OCI-LY7 (cell line): ENCODE measurements at regions of chr7 and their contacts with region 1.

Region 1: GRCh38 chr7:149714050-149714909 is 59.1 kb downstream of the ZNF467 start:
- DNase-seq: peak; percentile 93
- H3K4me3 ChIP-seq: peak overlapping the region; percentile 96
- H3K27ac ChIP-seq: no peak overlapping the region
- H3K4me1 ChIP-seq: peaks cover 12% of the 10 kb centered on the region
- CTCF ChIP-seq: no peak

Region 2: DNA sequence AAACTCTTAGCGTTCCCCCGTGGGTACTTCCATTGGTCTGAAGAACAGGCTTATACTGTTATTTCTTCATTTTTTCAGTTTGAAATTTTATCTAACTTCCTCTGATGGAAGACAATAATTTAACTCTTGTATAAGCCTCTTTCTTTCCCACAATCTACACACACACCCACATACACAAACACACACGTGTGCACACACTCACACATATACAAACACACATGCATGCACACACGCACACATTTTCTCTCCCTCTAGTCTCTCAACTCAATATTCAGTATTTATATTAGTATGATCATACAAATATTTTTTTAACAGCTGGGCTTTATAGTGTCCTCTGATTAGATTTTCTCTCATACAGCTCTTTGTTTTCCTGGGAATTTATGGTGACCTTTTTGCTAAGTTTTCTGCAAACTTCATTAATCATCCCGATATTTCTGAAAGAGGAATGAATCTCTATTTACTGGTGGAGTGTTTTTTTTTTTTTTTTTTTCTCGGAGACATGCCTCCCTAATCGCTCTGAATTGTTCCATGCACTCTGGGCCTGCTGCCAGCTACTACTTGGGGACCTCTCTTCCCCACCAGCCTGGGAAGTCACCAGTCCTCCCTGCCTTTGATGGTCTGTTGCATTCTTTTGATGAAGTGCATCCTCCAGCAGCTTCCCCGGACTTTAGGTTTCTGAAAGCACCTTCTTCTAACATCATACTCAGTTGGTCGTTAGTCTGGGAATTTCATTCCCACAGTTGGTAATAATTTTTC is 328.9 kb before region 1 on chr7:
- CTCF ChIA-PET with region 1: no interaction called
- POLR2A ChIA-PET with region 1: no interaction called
- intact Hi-C with region 1: no loop called
- DNase-seq: no peak
- H3K4me3 ChIP-seq: no peak overlapping the region
- H3K27ac ChIP-seq: no peak overlapping the region
- H3K4me1 ChIP-seq: no peaks in the 10 kb centered on the region
- CTCF ChIP-seq: no peak

Region 3: GRCh38 chr7:149771721-149772240 is 57.5 kb after region 1 on chr7:
- CTCF ChIA-PET with region 1: interaction called, 3 read pairs
- POLR2A ChIA-PET with region 1: no interaction called
- intact Hi-C with region 1: loop called (anchors 5 kb)
- DNase-seq: peak; percentile 87
- H3K4me3 ChIP-seq: peak overlapping the region; percentile 71
- H3K27ac ChIP-seq: no peak overlapping the region
- H3K4me1 ChIP-seq: peaks cover 14% of the 10 kb centered on the region
- CTCF ChIP-seq: no peak